ENCODE measurements at regions of chr3 and their contacts with region 1.

Region 1: DNA sequence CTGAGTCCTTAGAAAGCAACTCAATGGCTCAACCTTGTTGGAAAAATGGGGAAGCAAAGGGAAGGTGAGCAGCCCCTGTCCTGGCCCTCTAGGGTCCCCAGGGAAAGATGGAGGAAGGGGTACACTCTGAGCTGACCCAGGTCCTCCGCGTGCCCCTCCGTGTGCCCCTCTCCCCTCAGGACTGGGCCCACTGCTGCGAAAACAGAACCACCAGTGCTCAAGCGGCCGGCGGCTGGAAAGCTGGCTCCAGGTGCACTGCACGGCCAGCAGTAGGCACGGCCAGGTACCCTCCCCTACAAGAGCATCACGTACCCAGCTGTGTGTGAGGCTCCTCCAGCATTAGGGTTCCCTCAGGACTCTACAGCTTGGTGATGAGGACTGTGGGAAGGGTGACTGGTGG is 26.3 kb downstream of the RAB43 start:
- DNase-seq: no peak
- H3K4me3 Mint-ChIP-seq: no peak overlapping the region
- H3K27ac Mint-ChIP-seq: no peak overlapping the region
- H3K4me1 Mint-ChIP-seq: no peaks in the 10 kb centered on the region
- H3K27me3 Mint-ChIP-seq: no peaks in the 10 kb centered on the region
- CTCF ChIP-seq: no peak

Region 2: DNA sequence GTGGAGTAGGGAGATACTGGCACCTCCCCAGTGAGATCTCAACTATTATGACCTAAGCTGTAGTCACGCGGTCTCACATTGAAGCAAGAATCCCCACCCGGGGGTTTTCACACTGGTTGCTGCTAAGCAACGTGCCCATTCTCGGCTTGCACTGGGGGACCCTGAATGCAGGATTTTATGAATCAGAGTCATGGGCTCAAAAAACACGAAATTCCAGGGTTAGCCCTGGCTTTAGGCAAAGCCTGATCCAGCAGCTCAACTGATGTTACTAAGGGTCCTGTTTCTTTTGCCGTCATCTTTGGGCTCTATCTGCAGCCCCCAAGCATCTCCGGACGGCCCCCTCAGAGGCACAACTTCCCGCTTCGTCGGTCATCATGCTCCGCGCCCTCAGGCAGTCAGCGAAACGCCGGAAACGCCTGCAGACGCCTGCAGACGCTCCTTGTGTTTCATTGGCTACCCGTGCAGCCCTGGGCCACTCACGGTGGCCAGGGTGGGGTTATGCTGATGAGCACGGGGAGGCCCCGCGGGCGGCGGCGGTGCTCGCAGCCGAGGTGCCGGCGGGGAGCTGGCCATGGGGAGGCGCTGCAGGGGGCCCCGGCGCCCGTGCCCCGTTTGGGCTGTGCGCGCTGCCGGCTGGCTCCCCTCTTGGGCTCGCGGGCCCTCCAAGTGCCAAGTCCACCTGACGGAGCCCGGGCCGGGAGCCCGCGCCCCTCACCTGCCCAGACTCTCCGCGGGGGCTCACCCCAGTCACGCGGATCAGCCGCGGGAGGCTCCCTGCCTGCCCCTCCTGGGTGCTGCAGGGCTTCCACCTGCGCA is 68.3 kb before region 1 on chr3:
- CTCF ChIA-PET with region 1: interaction called, 3 read pairs
- intact Hi-C with region 1: loop called (anchors 10 kb)
- DNase-seq: peak; percentile 96
- H3K4me3 Mint-ChIP-seq: peak overlapping the region; percentile 44
- H3K27ac Mint-ChIP-seq: peak overlapping the region; percentile 17
- H3K4me1 Mint-ChIP-seq: peaks cover 8% of the 10 kb centered on the region
- H3K27me3 Mint-ChIP-seq: peaks cover 51% of the 10 kb centered on the region
- CTCF ChIP-seq: peak; percentile 86

Measured in Calu3 (cell line).